ENCODE measurements at regions of chr10 and their contacts with region 1.

Region 1: DNA sequence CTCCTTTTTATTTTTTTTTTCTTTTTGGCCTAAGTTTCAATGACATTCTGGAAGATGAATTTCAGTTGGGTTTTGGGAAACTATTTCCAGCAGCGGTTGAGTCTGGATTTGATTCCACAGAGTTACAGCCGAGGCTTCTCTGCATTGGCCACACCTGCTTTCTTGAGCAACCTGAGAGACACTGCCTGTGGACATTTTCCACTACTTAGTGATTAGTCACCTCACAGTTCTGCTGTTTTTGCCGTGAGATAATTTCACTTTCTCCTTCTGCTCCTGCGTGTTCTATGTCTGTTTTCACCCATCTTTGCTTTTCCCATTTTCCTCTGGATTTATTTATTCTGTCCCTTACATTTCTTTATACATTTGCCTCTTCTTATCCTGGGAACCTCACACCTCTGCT is 243.0 kb downstream of the BICC1 start:
- DNase-seq: peak; percentile 68
- ATAC-seq: peak; percentile 36
- H3K4me3 ChIP-seq: peak overlapping the region; percentile 35; the same call in 1 of the 2 replicates
- H3K27ac ChIP-seq: peak overlapping the region; percentile 58; the same call in 1 of the 2 replicates
- H3K4me1 ChIP-seq: peaks cover 16% of the 10 kb centered on the region
- H3K27me3 ChIP-seq: no peaks in the 10 kb centered on the region
- CTCF ChIP-seq: no peak
- POLR2A ChIP-seq: no peak
- RAD21 ChIP-seq: 0 out of 2 replicates have a peak, but pooled peaks have one; percentile 8

Region 2: DNA sequence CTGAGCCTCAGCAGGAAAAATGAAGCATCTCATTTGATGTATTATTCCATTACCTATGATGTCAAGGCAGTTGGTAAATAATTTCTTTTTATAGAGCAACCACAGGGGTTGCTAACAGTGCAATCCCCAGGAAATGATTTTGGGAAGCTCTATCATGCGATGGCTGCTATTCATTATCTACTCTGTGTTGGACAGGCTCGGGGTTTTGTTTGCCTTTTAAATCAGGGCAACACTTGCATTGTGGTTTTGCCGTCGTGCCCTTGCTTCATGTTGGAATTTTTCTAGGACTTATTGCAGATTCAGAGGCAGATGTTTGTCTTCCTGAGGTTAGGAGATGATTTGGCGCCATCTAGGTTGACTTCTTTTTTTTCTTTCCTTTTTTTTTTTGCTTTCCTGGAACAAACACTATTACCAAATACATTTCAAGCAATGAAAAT is 114.6 kb before region 1 on chr10:
- CTCF ChIA-PET with region 1: interaction called, 3 read pairs
- POLR2A ChIA-PET with region 1: no interaction called
- dilution Hi-C with region 1: no loop called
- in situ Hi-C with region 1: no loop called
- intact Hi-C with region 1: loop called (anchors 5 kb)
- DNase-seq: peak; percentile 92
- ATAC-seq: peak; percentile 76
- H3K4me3 ChIP-seq: no peak overlapping the region
- H3K27ac ChIP-seq: no peak overlapping the region
- H3K4me1 ChIP-seq: peaks cover 10% of the 10 kb centered on the region; the same call in 1 of the 2 replicates
- H3K27me3 ChIP-seq: no peaks in the 10 kb centered on the region
- CTCF ChIP-seq: peak; percentile 46
- POLR2A ChIP-seq: no peak
- RAD21 ChIP-seq: peak; percentile 42; the same call in 1 of the 2 replicates

Measured in IMR-90 (cell line).